IMR-90 (cell line): ENCODE measurements at regions of chr12 and their contacts with region 1.

Region 1: GRCh38 chr12:63826006-63826585 is 18.4 kb upstream of the SRGAP1 start:
- DNase-seq: peak; percentile 82
- ATAC-seq: peak; percentile 77
- H3K4me3 ChIP-seq: no peak overlapping the region
- H3K27ac ChIP-seq: no peak overlapping the region
- H3K4me1 ChIP-seq: peaks cover 8% of the 10 kb centered on the region
- H3K27me3 ChIP-seq: no peaks in the 10 kb centered on the region
- CTCF ChIP-seq: peak; percentile 93
- POLR2A ChIP-seq: peak; percentile 41; the same call in 1 of the 2 replicates
- RAD21 ChIP-seq: peak; percentile 91

Region 2: GRCh38 chr12:63747553-63747952 is 78.5 kb before region 1 on chr12:
- CTCF ChIA-PET with region 1: no interaction called
- POLR2A ChIA-PET with region 1: no interaction called
- dilution Hi-C with region 1: no loop called
- in situ Hi-C with region 1: no loop called
- intact Hi-C with region 1: no loop called
- DNase-seq: no peak
- ATAC-seq: no peak
- H3K4me3 ChIP-seq: no peak overlapping the region
- H3K27ac ChIP-seq: no peak overlapping the region
- H3K4me1 ChIP-seq: no peaks in the 10 kb centered on the region
- H3K27me3 ChIP-seq: no peaks in the 10 kb centered on the region; the same call in 1 of the 2 replicates
- CTCF ChIP-seq: no peak
- POLR2A ChIP-seq: no peak
- RAD21 ChIP-seq: no peak

Region 3: DNA sequence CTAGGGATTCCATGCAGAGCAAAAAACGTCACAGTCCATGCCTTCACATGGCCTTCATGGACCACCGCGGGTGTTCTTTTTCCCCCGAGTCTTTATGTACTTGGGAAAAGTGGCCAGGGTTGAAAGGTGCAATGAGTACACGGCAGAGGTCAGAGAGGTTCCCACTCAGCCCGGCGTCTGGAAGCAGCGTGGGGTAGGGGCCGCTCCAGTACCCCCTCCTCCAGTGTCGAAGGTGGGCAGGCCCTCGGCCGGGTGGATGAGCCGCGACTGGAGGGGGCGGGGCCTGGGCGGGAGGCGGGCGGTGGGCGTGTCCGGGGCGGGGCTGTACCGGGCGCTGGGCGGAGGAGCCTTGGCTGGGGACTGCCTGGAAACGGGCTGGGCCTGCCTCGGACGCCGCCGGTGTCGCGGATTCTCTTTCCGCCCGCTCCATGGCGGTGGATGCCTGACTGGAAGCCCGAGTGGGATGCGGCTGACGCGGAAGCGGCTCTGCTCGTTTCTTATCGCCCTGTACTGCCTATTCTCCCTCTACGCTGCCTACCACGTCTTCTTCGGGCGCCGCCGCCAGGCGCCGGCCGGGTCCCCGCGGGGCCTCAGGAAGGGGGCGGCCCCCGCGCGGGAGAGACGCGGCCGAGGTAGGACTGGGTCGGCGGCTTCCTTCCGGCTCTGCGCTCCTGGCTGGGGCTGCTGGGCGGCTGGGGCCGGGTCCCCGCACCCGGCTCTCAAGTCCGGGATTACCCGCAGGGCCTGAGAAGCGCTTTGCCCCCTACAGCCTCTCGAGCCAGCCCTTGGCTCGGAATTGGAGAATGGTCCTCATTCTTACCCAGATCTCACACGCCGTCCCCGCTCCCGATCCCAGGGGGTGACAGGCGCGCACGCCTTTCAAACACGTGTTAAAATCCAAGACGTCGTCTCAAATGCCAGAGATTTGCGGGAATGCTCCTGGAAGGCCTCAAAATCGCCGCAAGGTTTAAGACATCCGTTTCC is 46.3 kb before region 1 on chr12 and contains the start of gene RXYLT1:
- CTCF ChIA-PET with region 1: no interaction called
- POLR2A ChIA-PET with region 1: no interaction called
- dilution Hi-C with region 1: no loop called
- in situ Hi-C with region 1: no loop called
- intact Hi-C with region 1: loop called (anchors 1 kb)
- DNase-seq: peak; percentile 67
- ATAC-seq: peak; percentile 99
- H3K4me3 ChIP-seq: peak within 1 kb of the TSS; percentile 91
- H3K27ac ChIP-seq: peak within 1 kb of the TSS; percentile 99
- H3K4me1 ChIP-seq: no peaks in the 10 kb centered on the region
- H3K27me3 ChIP-seq: no peaks in the 10 kb centered on the region
- CTCF ChIP-seq: no peak
- POLR2A ChIP-seq: peak; percentile 84
- RAD21 ChIP-seq: no peak
- total RNA-seq, gene RXYLT1: 9.0 and 9.7 TPM in 2 replicates

Region 4: DNA sequence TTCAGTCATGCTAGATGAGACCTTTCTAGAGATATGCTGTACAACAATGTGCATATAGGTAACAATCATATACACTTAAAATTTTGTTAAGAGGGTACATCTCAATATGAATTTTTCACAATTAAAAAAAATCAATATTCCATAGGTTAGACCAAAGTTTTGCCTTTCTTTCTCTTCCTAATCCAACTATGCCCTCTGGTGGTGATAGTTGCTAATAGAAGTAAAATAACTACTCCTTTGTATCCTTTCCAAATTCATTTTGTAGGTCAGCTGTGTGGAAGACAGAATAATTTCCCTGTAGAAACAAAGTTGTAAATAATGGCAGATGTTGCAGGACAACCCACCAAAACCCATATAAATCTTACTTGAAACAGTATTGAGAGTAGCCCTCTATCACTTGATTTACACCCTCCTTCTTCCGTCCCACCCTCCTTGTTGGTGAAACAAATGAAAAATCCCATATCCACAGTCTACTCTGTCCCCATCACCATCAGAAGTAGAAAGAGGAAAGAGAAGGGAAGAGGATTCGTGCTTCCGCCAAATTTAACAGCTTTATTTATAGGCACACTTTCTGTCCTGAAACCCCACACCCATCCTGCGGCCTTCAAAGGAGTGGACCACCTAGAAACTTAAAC is 430.2 kb after region 1 on chr12:
- CTCF ChIA-PET with region 1: interaction called, 8 read pairs
- POLR2A ChIA-PET with region 1: no interaction called
- dilution Hi-C with region 1: loop called (anchors 25 kb)
- in situ Hi-C with region 1: no loop called
- intact Hi-C with region 1: loop called (anchors 1 kb)
- DNase-seq: peak; percentile 67
- ATAC-seq: peak; percentile 66
- H3K4me3 ChIP-seq: no peak overlapping the region
- H3K27ac ChIP-seq: no peak overlapping the region
- H3K4me1 ChIP-seq: peaks cover 3% of the 10 kb centered on the region; the same call in 1 of the 2 replicates
- H3K27me3 ChIP-seq: no peaks in the 10 kb centered on the region
- CTCF ChIP-seq: peak; percentile 89
- POLR2A ChIP-seq: no peak
- RAD21 ChIP-seq: peak; percentile 95

Region 5: DNA sequence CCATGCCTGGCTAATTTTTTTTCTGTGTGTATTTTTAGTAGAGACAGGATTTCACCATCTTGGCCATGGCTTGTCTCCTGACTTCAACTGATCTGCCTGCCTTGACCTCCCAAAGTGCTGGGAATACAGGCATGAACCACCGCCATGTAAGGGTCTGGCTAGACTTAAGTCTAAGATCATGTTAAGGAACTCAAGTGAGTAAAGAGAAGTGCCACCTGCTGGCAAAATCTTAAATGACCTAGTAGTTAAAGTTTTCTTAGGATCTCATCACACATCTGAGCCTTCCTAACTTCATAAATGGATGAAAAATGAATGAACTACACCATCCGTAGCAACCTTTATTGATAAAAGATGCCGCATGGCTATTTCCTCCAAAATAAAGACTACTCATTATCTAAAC is 566.1 kb after region 1 on chr12:
- CTCF ChIA-PET with region 1: interaction called, 3 read pairs
- POLR2A ChIA-PET with region 1: no interaction called
- dilution Hi-C with region 1: no loop called
- in situ Hi-C with region 1: loop called (anchors 5 kb)
- intact Hi-C with region 1: loop called (anchors 1 kb)
- DNase-seq: peak; percentile 56
- ATAC-seq: peak; percentile 73; the same call in 1 of the 2 replicates
- H3K4me3 ChIP-seq: no peak overlapping the region
- H3K27ac ChIP-seq: no peak overlapping the region
- H3K4me1 ChIP-seq: no peaks in the 10 kb centered on the region
- H3K27me3 ChIP-seq: peaks cover 6% of the 10 kb centered on the region; the same call in 1 of the 2 replicates
- CTCF ChIP-seq: peak; percentile 52
- POLR2A ChIP-seq: no peak
- RAD21 ChIP-seq: peak; percentile 37; the same call in 1 of the 2 replicates

Region 6: GRCh38 chr12:64403707-64404469 is 577.8 kb after region 1 on chr12 and contains the start of gene XPOT:
- CTCF ChIA-PET with region 1: interaction called, 5 read pairs
- POLR2A ChIA-PET with region 1: no interaction called
- dilution Hi-C with region 1: no loop called
- in situ Hi-C with region 1: loop called (anchors 5 kb)
- intact Hi-C with region 1: loop called (anchors 5 kb)
- DNase-seq: peak; percentile 98
- ATAC-seq: peak; percentile 90
- H3K4me3 ChIP-seq: peak within 1 kb of the TSS; percentile 77
- H3K27ac ChIP-seq: peak within 1 kb of the TSS; percentile 97
- H3K4me1 ChIP-seq: peaks cover 5% of the 10 kb centered on the region
- H3K27me3 ChIP-seq: no peaks in the 10 kb centered on the region
- CTCF ChIP-seq: no peak
- POLR2A ChIP-seq: 0 out of 2 replicates have a peak, but pooled peaks have one; percentile 13
- RAD21 ChIP-seq: no peak
- total RNA-seq, gene XPOT: 79.4 and 80.8 TPM in 2 replicates